CD8-positive, alpha-beta T cell (primary cell): ENCODE measurements at regions of chr1 and their contacts with region 1.

Region 1: GRCh38 chr1:171480035-171480434 is 5.3 kb upstream of the PRRC2C start:
- DNase-seq: no peak
- ATAC-seq: no peak
- H3K4me3 ChIP-seq: no peak overlapping the region
- H3K4me3 Mint-ChIP-seq: no peak overlapping the region
- H3K27ac ChIP-seq: no peak overlapping the region
- H3K27ac Mint-ChIP-seq: no peak overlapping the region
- H3K4me1 ChIP-seq: peaks cover 7% of the 10 kb centered on the region
- H3K4me1 Mint-ChIP-seq: peaks cover 6% of the 10 kb centered on the region
- H3K27me3 ChIP-seq: no peaks in the 10 kb centered on the region
- H3K27me3 Mint-ChIP-seq: no peaks in the 10 kb centered on the region
- CTCF ChIP-seq: no peak

Region 2: GRCh38 chr1:169899519-169900217 is 1580.4 kb before region 1 on chr1:
- CTCF ChIA-PET with region 1: no interaction called
- POLR2A ChIA-PET with region 1: no interaction called
- intact Hi-C with region 1: loop called (anchors 1 to 2 kb)
- DNase-seq: no peak
- ATAC-seq: no peak
- H3K4me3 ChIP-seq: no peak overlapping the region
- H3K4me3 Mint-ChIP-seq: no peak overlapping the region
- H3K27ac ChIP-seq: no peak overlapping the region
- H3K27ac Mint-ChIP-seq: no peak overlapping the region
- H3K4me1 ChIP-seq: peaks cover 17% of the 10 kb centered on the region
- H3K4me1 Mint-ChIP-seq: peaks cover 22% of the 10 kb centered on the region
- H3K27me3 ChIP-seq: no peaks in the 10 kb centered on the region
- H3K27me3 Mint-ChIP-seq: no peaks in the 10 kb centered on the region
- CTCF ChIP-seq: no peak

Region 3: DNA sequence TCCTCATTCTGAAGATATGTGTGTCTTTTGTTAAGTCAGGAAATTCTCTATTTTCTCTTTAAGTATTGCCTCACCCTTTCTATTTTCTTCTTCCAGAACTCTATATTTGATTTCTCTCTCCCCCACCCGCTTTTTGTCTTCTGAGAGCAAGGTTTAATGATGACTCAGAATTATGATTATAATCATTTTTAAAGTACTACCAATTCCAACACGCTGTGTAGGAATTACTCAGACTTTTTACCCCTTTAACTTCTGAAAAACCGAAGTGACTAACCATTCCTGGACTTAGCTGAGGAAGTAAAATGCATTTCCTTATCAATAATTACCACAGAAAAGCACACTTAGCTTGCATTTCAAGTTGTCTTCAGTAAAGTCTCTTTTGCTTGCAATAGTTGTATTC is 1565.5 kb before region 1 on chr1:
- CTCF ChIA-PET with region 1: no interaction called
- POLR2A ChIA-PET with region 1: no interaction called
- intact Hi-C with region 1: no loop called
- DNase-seq: no peak
- ATAC-seq: no peak
- H3K4me3 ChIP-seq: no peak overlapping the region
- H3K4me3 Mint-ChIP-seq: no peak overlapping the region
- H3K27ac ChIP-seq: no peak overlapping the region
- H3K27ac Mint-ChIP-seq: no peak overlapping the region
- H3K4me1 ChIP-seq: no peaks in the 10 kb centered on the region
- H3K4me1 Mint-ChIP-seq: no peaks in the 10 kb centered on the region
- H3K27me3 ChIP-seq: no peaks in the 10 kb centered on the region
- H3K27me3 Mint-ChIP-seq: no peaks in the 10 kb centered on the region
- CTCF ChIP-seq: no peak